Body of pancreas (tissue), 4 donors: ENCODE measurements at regions of chr6 and their contacts with region 1.

Region 1: DNA sequence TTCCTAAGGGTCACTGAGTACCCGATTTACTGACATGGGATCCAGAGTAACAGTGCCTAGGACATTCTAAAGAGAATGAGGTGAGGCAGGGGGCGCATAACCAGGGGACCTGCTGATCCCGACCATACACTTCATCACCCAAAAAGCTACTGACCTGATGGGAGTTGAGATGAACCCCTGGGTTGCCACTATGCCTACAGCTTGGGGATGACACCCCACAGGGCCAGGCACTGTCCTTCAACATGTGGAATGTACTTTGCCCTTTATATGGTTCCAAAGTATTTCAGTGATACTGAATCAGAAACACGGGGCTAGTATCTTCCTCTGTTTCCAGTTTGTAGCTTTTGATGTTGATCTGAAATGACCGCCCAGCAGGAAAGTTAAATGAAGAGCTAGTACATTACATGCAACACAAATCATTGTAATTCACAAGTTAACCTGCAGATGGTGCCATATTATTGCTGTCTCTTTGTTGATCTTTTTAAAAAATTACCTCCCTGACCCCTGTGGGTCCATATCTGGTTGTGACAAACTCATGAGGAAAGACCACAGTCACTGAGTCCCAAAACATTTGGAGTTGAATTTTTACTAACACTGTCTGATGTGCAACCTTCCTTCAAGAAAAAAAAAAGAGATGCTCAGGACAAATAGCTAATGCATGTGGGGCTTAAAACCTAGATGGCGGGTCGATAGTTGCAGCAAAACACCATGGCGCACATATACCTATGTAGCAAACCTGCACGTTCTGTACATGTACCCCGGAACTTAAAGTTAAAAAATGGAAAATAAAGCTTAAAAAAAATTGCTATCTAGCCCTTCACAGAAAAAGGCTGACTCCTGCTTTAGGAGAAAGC is 42.7 kb upstream of the GCNT2 start:
- DNase-seq: peak in 1 of 4 donors; percentile 4
- ATAC-seq: no peak
- H3K4me3 ChIP-seq: no peak overlapping the region
- H3K27ac ChIP-seq: no peak overlapping the region
- H3K4me1 ChIP-seq: no peaks in the 10 kb centered on the region
- H3K27me3 ChIP-seq: no peaks in the 10 kb centered on the region
- CTCF ChIP-seq: peak; percentile 41 to 72 (median 64)
- POLR2A ChIP-seq: no peak

Region 2: GRCh38 chr6:10687582-10687981 is 209.2 kb after region 1 on chr6:
- intact Hi-C with region 1: no loop called
- DNase-seq: no peak
- ATAC-seq: no peak
- H3K4me3 ChIP-seq: no peak overlapping the region
- H3K27ac ChIP-seq: no peak overlapping the region
- H3K4me1 ChIP-seq: no peaks in the 10 kb centered on the region
- H3K27me3 ChIP-seq: no peaks in the 10 kb centered on the region
- CTCF ChIP-seq: no peak
- POLR2A ChIP-seq: no peak

Region 3: GRCh38 chr6:10800829-10801535 is 322.6 kb after region 1 on chr6:
- intact Hi-C with region 1: loop called (anchors 5 kb)
- DNase-seq: peak; percentile 54 to 70 (median 58)
- ATAC-seq: peak; percentile 83
- H3K4me3 ChIP-seq: no peak overlapping the region
- H3K27ac ChIP-seq: no peak overlapping the region
- H3K4me1 ChIP-seq: no peaks in the 10 kb centered on the region
- H3K27me3 ChIP-seq: no peaks in the 10 kb centered on the region
- CTCF ChIP-seq: peak; percentile 86 to 99 (median 87)
- POLR2A ChIP-seq: no peak